Posterior vena cava (tissue), 2 donors: ENCODE measurements at regions of chr7 and their contacts with region 1.

Region 1: GRCh38 chr7:27095897-27096767 is at the start of gene HOXA1:
- DNase-seq: peak; percentile 96
- total RNA-seq, gene HOXA1: 0.71 to 0.97 TPM

Region 2: GRCh38 chr7:26853788-26854393 is 242.2 kb before region 1 on chr7:
- intact Hi-C with region 1: loop called (anchors 1 to 5 kb)
- DNase-seq: no peak

Region 3: GRCh38 chr7:27031289-27032172 is 64.6 kb before region 1 on chr7:
- intact Hi-C with region 1: loop called in 1 of 2 experiments (anchors 10 kb)
- DNase-seq: no peak

Region 4: GRCh38 chr7:27547401-27547800 is 451.3 kb after region 1 on chr7:
- intact Hi-C with region 1: no loop called
- DNase-seq: no peak